ENCODE measurements at regions of chr1 and their contacts with region 1.

Region 1: GRCh38 chr1:228734881-228735801 is at the start of gene RHOU:
- DNase-seq: peak; percentile 19 to 85
- H3K4me3 ChIP-seq: peak within 1 kb of the TSS; percentile 97 to 98
- H3K27ac ChIP-seq: peak within 1 kb of the TSS; percentile 96 to 97
- H3K4me1 ChIP-seq: peaks cover 3 to 21% of the 10 kb centered on the region in 2 donors
- H3K27me3 ChIP-seq: no peaks in the 10 kb centered on the region
- CTCF ChIP-seq: peak; percentile 36 to 98 (median 49)
- total RNA-seq, gene RHOU: 27.7 TPM

Region 2: DNA sequence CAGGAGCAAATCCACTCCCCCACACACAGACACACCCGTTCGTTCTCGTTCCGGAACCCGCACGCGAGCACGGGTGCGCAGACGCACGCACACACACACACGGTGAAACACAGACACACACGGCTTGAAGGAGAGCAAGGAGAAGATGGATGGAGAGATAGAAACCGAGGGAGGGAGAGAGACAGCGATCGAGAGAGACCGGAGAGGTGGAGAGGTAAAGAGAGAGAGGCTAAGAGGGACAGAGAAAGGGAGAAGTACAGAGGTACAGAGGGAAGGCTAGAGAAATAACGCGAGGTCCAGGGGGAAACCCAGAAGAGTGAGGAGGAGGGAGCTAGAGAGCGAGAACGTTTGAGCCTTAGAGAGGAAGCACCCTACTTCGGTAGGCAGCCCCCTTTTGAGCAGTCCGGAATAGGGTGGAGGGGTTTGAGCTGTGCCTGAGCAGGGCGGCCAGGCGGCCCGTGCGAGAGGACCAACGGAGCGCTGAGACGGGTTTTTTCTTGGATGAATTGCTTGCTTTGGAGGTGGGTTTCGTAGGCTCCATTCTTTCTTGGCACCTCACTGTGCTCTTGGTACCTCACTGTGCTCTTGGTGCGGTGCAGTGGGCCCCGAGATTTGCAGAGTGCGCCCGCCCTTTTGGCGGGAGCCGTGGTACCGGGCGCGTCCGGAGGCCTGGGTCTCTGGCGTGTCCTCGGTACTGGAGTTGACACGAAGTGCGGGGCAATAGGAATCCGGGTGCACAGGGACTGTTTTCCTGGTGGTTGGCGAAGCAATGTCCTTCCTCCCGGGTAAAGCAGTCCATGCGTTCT is 88.2 kb before region 1 on chr1:
- intact Hi-C with region 1: no loop called
- DNase-seq: peak in 1 of 2 donors; percentile 75
- H3K4me3 ChIP-seq: peak overlapping the region; percentile 51 to 76
- H3K27ac ChIP-seq: peak overlapping the region; percentile 46 to 69
- H3K4me1 ChIP-seq: peaks cover 4 to 16% of the 10 kb centered on the region in 2 donors
- H3K27me3 ChIP-seq: peaks cover 3% of the 10 kb centered on the region
- CTCF ChIP-seq: no peak

Region 3: GRCh38 chr1:228664399-228664914 is 70.7 kb before region 1 on chr1:
- intact Hi-C with region 1: loop called (anchors 2 kb)
- DNase-seq: peak in 1 of 2 donors; percentile 88
- H3K4me3 ChIP-seq: peak overlapping the region in 1 of 2 donors; percentile 41
- H3K27ac ChIP-seq: no peak overlapping the region
- H3K4me1 ChIP-seq: peaks cover 5 to 7% of the 10 kb centered on the region in 2 donors
- H3K27me3 ChIP-seq: no peaks in the 10 kb centered on the region
- CTCF ChIP-seq: peak; percentile 77 to 91 (median 77)

Region 4: DNA sequence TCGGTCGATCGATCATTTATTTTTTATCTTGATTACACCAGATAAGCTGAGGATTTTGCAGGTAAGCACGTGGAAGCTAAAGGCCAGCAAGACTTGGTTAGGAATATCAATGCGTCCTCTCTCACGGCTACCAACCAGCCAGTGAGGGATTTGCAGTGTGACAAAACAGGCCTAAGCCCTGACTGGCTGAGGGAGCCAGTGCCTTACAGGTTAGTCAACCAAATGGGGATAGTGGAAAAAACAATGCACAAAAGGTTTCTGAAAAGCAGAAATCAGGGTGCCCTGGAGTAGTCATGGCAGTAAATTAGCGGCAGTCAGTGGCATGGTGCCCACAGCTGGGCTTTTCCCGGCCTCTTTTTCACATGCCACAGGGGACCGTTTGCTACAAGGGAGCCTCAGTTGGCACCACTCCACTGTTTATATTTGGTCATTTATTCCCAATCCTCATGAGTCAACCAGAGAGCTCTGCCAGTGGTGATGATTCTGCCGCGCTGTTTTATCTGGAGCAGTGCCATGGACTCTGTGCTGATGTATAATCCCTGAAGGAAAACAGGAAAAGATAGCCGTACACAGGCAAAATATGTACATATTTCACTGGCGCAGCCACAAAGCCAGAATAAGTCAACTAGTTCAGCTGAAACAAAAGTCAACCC is 167.8 kb after region 1 on chr1:
- intact Hi-C with region 1: loop called (anchors 5 kb)
- DNase-seq: peak; percentile 72 to 97
- H3K4me3 ChIP-seq: no peak overlapping the region
- H3K27ac ChIP-seq: peak overlapping the region; percentile 83 to 95
- H3K4me1 ChIP-seq: peaks cover 0 to 10% of the 10 kb centered on the region in 2 donors
- H3K27me3 ChIP-seq: no peaks in the 10 kb centered on the region
- CTCF ChIP-seq: no peak

Region 5: GRCh38 chr1:229087339-229087738 is 352.2 kb after region 1 on chr1:
- intact Hi-C with region 1: loop called (anchors 5 kb)
- DNase-seq: peak in 1 of 2 donors; percentile 80
- H3K4me3 ChIP-seq: no peak overlapping the region
- H3K27ac ChIP-seq: peak overlapping the region; percentile 79 to 84
- H3K4me1 ChIP-seq: peaks cover 6 to 41% of the 10 kb centered on the region in 2 donors
- H3K27me3 ChIP-seq: no peaks in the 10 kb centered on the region
- CTCF ChIP-seq: no peak

Region 6: GRCh38 chr1:229156872-229157271 is 421.7 kb after region 1 on chr1:
- intact Hi-C with region 1: loop called (anchors 1 kb)
- DNase-seq: peak in 1 of 2 donors; percentile 75
- H3K4me3 ChIP-seq: no peak overlapping the region
- H3K27ac ChIP-seq: peak overlapping the region in 1 of 2 donors; percentile 6
- H3K4me1 ChIP-seq: peaks cover 0 to 12% of the 10 kb centered on the region in 2 donors
- H3K27me3 ChIP-seq: no peaks in the 10 kb centered on the region
- CTCF ChIP-seq: peak; percentile 69 to 73 (median 72)

Measured in ascending aorta (tissue), 2 donors.